Esophagus muscularis mucosa (tissue), 4 donors: ENCODE measurements at regions of chr10 and their contacts with region 1.

Region 1: DNA sequence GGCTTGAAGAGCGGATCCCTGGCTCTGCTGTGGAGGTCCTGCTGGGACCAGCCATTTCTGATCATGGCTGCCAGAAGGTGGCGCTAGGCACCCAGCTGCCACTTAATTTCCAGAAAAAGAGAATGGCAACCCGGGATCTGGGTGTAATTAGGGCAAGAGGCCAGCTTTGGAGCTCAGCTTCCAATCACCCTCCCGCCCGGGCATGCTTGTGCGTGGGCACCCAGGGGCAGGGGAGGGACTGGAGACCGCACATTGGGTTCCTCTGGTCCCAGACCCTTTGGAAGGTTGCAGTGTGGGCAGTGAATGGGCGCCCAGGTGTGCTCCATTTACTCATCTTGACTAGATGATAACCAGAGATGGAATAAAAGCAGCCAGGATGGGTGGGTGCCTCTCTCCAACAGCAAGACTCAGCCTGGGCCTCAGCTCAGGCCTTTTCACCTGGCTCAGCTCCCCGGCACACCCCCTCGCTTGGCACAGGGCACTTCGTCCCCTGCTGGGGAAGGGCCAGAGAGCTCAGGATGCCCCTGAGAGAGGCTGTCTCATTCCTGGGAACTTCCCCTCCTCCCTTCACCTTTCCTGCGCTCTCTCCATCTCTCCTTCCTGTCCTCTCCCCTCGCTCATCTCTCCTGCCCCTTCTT is 14.7 kb downstream of the FAM241B start:
- DNase-seq: no peak
- H3K4me3 ChIP-seq: no peak overlapping the region
- H3K27ac ChIP-seq: no peak overlapping the region
- H3K4me1 ChIP-seq: peaks cover 0 to 4% (median 0%) of the 10 kb centered on the region in 4 donors
- H3K27me3 ChIP-seq: peaks cover 0 to 24% (median 0%) of the 10 kb centered on the region in 4 donors
- CTCF ChIP-seq: peak; percentile 56 to 72 (median 66)
- EP300 ChIP-seq: no peak
- POLR2A ChIP-seq: no peak

Region 2: GRCh38 chr10:69527961-69528360 is 116.8 kb before region 1 on chr10:
- intact Hi-C with region 1: no loop called
- DNase-seq: peak; percentile 91
- H3K4me3 ChIP-seq: no peak overlapping the region
- H3K27ac ChIP-seq: no peak overlapping the region
- H3K4me1 ChIP-seq: no peaks in the 10 kb centered on the region
- H3K27me3 ChIP-seq: no peaks in the 10 kb centered on the region
- CTCF ChIP-seq: no peak
- EP300 ChIP-seq: no peak
- POLR2A ChIP-seq: no peak

Region 3: DNA sequence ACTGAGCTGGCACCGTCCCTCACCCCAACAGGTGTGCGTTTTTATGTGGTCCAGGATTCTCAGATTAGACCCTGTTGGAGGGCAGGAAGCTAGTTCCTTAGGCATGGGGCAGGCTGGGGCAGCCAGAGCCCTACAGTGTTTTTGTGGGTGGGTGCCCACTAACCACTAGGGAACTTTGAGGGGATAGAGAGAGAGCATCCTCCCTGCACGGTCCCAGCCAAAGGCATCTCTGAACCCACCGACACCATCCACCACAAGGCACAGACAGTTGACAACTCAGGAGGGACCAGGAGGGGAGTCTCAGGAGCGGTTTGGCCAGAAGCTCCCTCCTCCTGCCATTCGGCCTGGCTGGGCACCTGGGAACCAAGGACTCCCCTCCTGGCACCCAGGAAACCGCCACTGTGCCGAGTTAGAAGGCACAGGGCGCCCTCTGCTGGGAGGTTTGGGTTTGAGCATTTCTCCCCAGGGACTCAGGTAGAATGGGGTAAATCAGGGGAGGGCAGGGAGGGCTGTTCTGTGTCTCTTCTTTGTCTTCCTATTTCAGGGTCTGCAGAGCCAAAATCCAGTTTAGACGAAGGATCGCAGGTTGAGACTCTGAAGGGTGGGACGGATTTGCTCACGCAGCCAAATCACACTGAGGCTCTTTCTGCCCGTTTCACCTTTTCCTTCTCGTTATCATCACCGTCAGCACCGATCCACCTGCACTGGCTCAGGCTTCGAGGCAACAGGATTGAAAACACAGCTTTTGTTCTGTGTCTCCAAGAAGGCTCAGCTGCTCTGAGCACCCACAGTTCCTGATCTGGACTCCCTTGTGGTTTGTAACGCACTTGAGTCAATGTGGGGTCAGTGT is 72.2 kb after region 1 on chr10:
- intact Hi-C with region 1: loop called (anchors 5 kb)
- DNase-seq: no peak
- H3K4me3 ChIP-seq: no peak overlapping the region
- H3K27ac ChIP-seq: no peak overlapping the region
- H3K4me1 ChIP-seq: peaks cover 0 to 10% (median 0%) of the 10 kb centered on the region in 4 donors
- H3K27me3 ChIP-seq: peaks cover 0 to 23% (median 0%) of the 10 kb centered on the region in 4 donors
- CTCF ChIP-seq: peak; percentile 47 to 63 (median 52)
- EP300 ChIP-seq: no peak
- POLR2A ChIP-seq: no peak